Gastrocnemius medialis (tissue), 4 donors: ENCODE measurements at regions of chr1 and their contacts with region 1.

Region 1: GRCh38 chr1:101288491-101288944 is 51.7 kb downstream of the S1PR1 start:
- DNase-seq: peak; percentile 14 to 27
- ATAC-seq: peak; percentile 68
- H3K4me3 ChIP-seq: no peak overlapping the region
- H3K27ac ChIP-seq: no peak overlapping the region
- H3K4me1 ChIP-seq: no peaks in the 10 kb centered on the region
- H3K27me3 ChIP-seq: no peaks in the 10 kb centered on the region
- CTCF ChIP-seq: peak; percentile 69 to 88 (median 72)
- POLR2A ChIP-seq: no peak

Region 2: DNA sequence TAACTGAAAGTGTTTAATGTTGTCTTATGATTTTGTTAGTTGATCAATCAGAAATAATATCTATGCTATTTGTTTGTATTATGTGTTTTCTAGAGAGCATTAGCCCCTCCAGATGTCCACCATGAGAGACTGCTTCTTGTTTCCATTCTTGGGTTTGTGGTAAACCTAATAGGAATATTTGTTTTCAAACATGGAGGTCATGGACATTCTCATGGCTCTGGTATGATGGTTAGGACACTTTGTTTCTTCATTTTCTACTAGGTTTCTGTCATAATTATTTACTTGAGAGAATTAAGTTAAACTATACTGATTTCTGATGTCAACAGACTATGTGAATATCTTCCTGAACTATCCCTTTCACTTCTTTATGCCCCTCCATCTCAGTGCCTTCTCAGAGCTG is 376.5 kb before region 1 on chr1:
- in situ Hi-C with region 1: loop called in 1 of 4 experiments (anchors 5 kb)
- intact Hi-C with region 1: no loop called
- DNase-seq: no peak
- ATAC-seq: no peak
- H3K4me3 ChIP-seq: no peak overlapping the region
- H3K27ac ChIP-seq: no peak overlapping the region
- H3K4me1 ChIP-seq: no peaks in the 10 kb centered on the region
- H3K27me3 ChIP-seq: no peaks in the 10 kb centered on the region
- CTCF ChIP-seq: no peak
- POLR2A ChIP-seq: no peak

Region 3: DNA sequence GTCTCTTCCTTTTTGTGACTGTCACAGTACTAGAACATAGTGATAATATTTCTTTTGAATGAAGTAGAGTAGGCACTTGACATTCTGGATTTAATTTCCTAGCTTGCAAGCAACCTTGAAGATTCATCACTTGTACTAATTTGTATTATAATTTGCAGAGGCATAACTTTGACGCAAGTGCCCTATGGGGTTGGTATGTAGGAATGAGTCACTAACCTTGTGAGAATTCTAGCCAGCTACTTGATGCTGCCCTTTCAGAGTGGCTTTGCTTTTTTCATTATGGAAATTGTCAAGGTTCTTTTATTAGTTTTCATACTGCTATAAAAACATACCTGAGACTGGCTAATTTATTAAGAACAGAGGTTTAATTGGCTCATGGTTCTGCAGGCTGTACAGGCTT is 249.3 kb before region 1 on chr1:
- in situ Hi-C with region 1: no loop called
- intact Hi-C with region 1: loop called (anchors 10 kb)
- DNase-seq: no peak
- ATAC-seq: no peak
- H3K4me3 ChIP-seq: no peak overlapping the region
- H3K27ac ChIP-seq: no peak overlapping the region
- H3K4me1 ChIP-seq: no peaks in the 10 kb centered on the region
- H3K27me3 ChIP-seq: no peaks in the 10 kb centered on the region
- CTCF ChIP-seq: no peak
- POLR2A ChIP-seq: no peak